Activated CD4-positive, alpha-beta memory T cell treated with anti-CD3 and anti-CD28 coated beads for 36 hours (primary cell): ENCODE measurements at regions of chr12 and their contacts with region 1.

Region 1: GRCh38 chr12:112108201-112109079 is at the start of gene NAA25:
- DNase-seq: peak; percentile 91
- H3K4me3 Mint-ChIP-seq: peak within 1 kb of the TSS; percentile 95
- H3K27ac Mint-ChIP-seq: peak within 1 kb of the TSS; percentile 95
- H3K4me1 Mint-ChIP-seq: peaks cover 54% of the 10 kb centered on the region
- H3K27me3 Mint-ChIP-seq: no peaks in the 10 kb centered on the region
- total RNA-seq, gene NAA25: 41.7 to 43.3 TPM

Region 2: GRCh38 chr12:112087055-112087850 is 21.2 kb before region 1 on chr12:
- CTCF ChIA-PET with region 1: interaction called, 4 read pairs
- POLR2A ChIA-PET with region 1: no interaction called
- intact Hi-C with region 1: loop called (anchors 1 kb)
- DNase-seq: no peak
- H3K4me3 Mint-ChIP-seq: no peak overlapping the region
- H3K27ac Mint-ChIP-seq: peak overlapping the region; percentile 26
- H3K4me1 Mint-ChIP-seq: peaks cover 25% of the 10 kb centered on the region
- H3K27me3 Mint-ChIP-seq: no peaks in the 10 kb centered on the region

Region 3: DNA sequence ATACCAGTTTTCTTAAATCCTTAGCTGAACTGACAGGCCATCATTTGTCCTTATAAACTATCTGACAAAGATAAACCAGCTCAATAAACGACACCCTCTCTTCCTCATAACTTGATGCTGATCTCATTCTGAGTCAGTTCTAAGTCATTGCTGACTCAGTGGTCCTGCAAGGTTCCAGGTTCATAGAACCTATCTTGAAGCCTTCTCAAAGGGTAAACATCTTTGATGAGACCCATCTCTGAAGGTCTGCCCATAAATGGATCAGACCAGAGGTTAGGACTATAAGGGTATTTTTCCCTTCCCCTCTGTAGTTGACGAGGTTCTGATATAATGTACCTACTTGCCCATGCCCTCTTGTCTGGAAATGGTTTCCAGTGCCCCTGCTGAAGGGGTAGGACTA is 11.8 kb before region 1 on chr12:
- CTCF ChIA-PET with region 1: interaction called, 6 read pairs
- POLR2A ChIA-PET with region 1: interaction called, 30 read pairs
- intact Hi-C with region 1: loop called (anchors 1 kb)
- DNase-seq: peak; percentile 54
- H3K4me3 Mint-ChIP-seq: peak overlapping the region; percentile 42
- H3K27ac Mint-ChIP-seq: peak overlapping the region; percentile 96
- H3K4me1 Mint-ChIP-seq: peaks cover 47% of the 10 kb centered on the region
- H3K27me3 Mint-ChIP-seq: no peaks in the 10 kb centered on the region

Region 4: GRCh38 chr12:112125250-112125999 is 17.0 kb after region 1 on chr12 and contains the start of gene TRAFD1:
- CTCF ChIA-PET with region 1: interaction called, 12 read pairs
- POLR2A ChIA-PET with region 1: interaction called, 60 read pairs
- intact Hi-C with region 1: loop called (anchors 1 kb)
- DNase-seq: peak; percentile 99
- H3K4me3 Mint-ChIP-seq: peak within 1 kb of the TSS; percentile 87
- H3K27ac Mint-ChIP-seq: peak within 1 kb of the TSS; percentile 87
- H3K4me1 Mint-ChIP-seq: peaks cover 36% of the 10 kb centered on the region
- H3K27me3 Mint-ChIP-seq: peaks cover 1% of the 10 kb centered on the region
- total RNA-seq, gene TRAFD1: 56.4 to 61.8 TPM

Region 5: GRCh38 chr12:112130441-112130998 is 22.1 kb after region 1 on chr12:
- CTCF ChIA-PET with region 1: interaction called, 12 read pairs
- POLR2A ChIA-PET with region 1: interaction called, 60 read pairs
- intact Hi-C with region 1: loop called (anchors 1 kb)
- DNase-seq: no peak
- H3K4me3 Mint-ChIP-seq: peak overlapping the region; percentile 55
- H3K27ac Mint-ChIP-seq: peak overlapping the region; percentile 76
- H3K4me1 Mint-ChIP-seq: peaks cover 56% of the 10 kb centered on the region
- H3K27me3 Mint-ChIP-seq: no peaks in the 10 kb centered on the region

Region 6: GRCh38 chr12:112409064-112409905 is 300.8 kb after region 1 on chr12 and contains the start of gene RPL6:
- CTCF ChIA-PET with region 1: no interaction called
- POLR2A ChIA-PET with region 1: no interaction called
- intact Hi-C with region 1: no loop called
- DNase-seq: peak; percentile 86
- H3K4me3 Mint-ChIP-seq: peak within 1 kb of the TSS; percentile 100
- H3K27ac Mint-ChIP-seq: peak within 1 kb of the TSS; percentile 100
- H3K4me1 Mint-ChIP-seq: peaks cover 37% of the 10 kb centered on the region
- H3K27me3 Mint-ChIP-seq: no peaks in the 10 kb centered on the region
- total RNA-seq, gene RPL6: 1,833 TPM